ENCODE measurements at regions of chr2 and their contacts with region 1.

Region 1: DNA sequence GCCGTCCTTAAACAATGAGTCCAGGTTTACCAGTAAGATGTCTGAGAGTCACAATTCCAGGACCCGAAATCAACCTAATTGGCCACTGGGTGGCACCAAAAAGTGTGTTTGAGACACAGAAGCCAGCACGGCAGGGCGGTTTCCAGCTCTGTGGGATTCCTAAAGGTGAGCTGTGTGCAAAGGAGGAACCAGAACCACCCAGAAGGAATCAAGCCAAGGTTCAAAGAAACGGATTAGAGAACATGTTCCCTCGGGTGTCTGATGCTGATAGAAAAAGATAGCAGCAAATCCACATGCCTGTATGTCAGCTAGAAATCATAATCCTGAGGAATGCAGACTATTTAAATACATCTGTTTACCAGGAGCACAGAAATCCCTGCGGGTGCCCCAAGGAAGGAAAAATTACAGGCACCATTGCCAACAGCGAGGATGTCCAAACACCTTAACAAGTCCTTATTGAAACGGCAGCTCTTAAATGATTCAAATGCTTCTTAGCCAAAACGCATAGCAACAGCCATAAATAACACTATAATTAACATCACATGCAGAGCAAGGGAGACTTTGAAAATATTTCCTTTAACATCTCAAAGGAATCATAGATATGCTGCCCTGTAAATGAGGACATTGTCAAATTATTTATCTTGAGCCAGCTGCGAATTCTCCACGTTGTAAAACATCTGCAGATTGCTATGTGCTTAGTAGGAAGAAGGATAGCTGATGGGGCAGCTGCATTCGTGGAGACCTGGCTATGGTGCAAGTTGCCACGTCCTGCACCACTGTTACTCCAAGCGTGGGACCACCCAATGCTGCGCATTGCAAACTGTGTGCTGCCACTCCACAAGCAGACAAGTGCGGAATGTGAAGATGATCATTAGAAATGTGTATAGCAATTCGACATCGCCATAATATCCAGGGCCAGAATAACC is 318.7 kb upstream of the NCKAP5 start:
- DNase-seq: peak; percentile 91
- ATAC-seq: peak; percentile 83
- H3K4me3 ChIP-seq: peak overlapping the region; percentile 46; the same call in 1 of the 2 replicates
- H3K27ac ChIP-seq: no peak overlapping the region
- H3K4me1 ChIP-seq: peaks cover 17% of the 10 kb centered on the region
- H3K27me3 ChIP-seq: no peaks in the 10 kb centered on the region
- CTCF ChIP-seq: peak; percentile 85

Region 2: GRCh38 chr2:133871545-133872209 is 15.3 kb before region 1 on chr2:
- CTCF ChIA-PET with region 1: no interaction called
- POLR2A ChIA-PET with region 1: no interaction called
- intact Hi-C with region 1: no loop called
- DNase-seq: peak; percentile 56
- ATAC-seq: peak; percentile 58; the same call in 1 of the 2 replicates
- H3K4me3 ChIP-seq: no peak overlapping the region
- H3K27ac ChIP-seq: no peak overlapping the region
- H3K4me1 ChIP-seq: no peaks in the 10 kb centered on the region
- H3K27me3 ChIP-seq: no peaks in the 10 kb centered on the region; the same call in 1 of the 2 replicates
- CTCF ChIP-seq: no peak

Region 3: GRCh38 chr2:134207564-134208209 is 320.7 kb after region 1 on chr2:
- CTCF ChIA-PET with region 1: interaction called, 6 read pairs
- POLR2A ChIA-PET with region 1: no interaction called
- intact Hi-C with region 1: loop called (anchors 5 kb)
- DNase-seq: peak; percentile 68
- ATAC-seq: peak; percentile 88
- H3K4me3 ChIP-seq: no peak overlapping the region
- H3K27ac ChIP-seq: no peak overlapping the region
- H3K4me1 ChIP-seq: peaks cover 6% of the 10 kb centered on the region
- H3K27me3 ChIP-seq: no peaks in the 10 kb centered on the region
- CTCF ChIP-seq: peak; percentile 88

Region 4: GRCh38 chr2:134745023-134745422 is 858.0 kb after region 1 on chr2:
- CTCF ChIA-PET with region 1: no interaction called
- POLR2A ChIA-PET with region 1: no interaction called
- intact Hi-C with region 1: no loop called
- DNase-seq: no peak
- ATAC-seq: no peak
- H3K4me3 ChIP-seq: no peak overlapping the region
- H3K27ac ChIP-seq: no peak overlapping the region
- H3K4me1 ChIP-seq: no peaks in the 10 kb centered on the region
- H3K27me3 ChIP-seq: no peaks in the 10 kb centered on the region
- CTCF ChIP-seq: no peak

Measured in PC-3 (cell line).